Activated T-helper 1 cell treated with anti-CD3 and anti-CD28 coated beads, Interleukin-12 subunit alpha, Interleukin-12 subunit beta, Interleukin-2, Interleukin-4 antibody, amounts not matched to agents 30 ng/mL and 10 ng/mL and 1 ng/mL, durations not matched to agents 14 hours and 24 hours and 36 hours (primary cell): ENCODE measurements at regions of chrX and their contacts with region 1.

Region 1: DNA sequence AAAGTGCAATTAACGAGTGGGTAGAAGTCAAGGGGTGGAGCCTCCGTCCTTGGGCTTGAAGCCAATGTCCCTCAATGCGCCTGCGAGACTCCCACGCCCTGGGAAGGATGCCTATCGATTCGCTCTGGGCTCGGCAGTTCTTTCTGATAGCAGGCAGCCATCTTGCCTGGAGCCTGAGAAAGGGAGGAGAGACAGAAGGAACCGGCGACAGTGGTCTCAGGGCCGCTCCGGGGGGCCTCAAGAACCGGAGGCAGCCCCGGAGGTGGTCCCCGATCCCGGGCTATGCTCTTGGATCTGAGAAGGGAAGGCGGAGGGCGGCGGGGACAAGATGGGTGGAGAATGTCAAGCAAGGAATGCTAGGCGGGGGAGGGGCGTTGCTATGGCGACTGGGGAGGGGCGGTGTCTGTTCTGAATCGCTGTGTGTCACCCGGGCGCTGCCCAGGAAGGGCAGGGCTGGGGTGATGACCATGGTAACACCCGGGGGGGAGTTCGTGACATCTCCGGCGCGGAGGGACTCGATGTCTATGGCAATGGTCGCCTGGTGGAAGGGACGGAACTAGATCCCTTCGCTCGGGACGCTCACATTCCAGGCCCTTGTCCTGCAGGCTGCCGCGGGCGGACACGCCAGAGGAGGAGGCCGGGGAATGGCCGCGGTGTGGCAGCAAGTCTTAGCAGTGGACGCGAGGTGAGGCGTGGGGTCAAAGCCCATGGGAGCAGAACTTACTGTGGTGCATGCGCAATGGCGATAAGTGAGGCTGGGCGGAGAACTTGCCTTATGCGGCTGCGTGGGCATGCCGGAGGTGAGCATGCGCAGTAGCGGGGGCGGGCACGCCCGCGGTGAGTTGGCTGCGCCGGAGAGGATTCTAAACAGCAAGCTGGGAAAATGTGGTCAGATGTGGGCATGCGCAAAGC is at the start of gene WDR13:
- DNase-seq: peak; percentile 87
- H3K4me3 Mint-ChIP-seq: peak within 1 kb of the TSS; percentile 88
- H3K27ac Mint-ChIP-seq: peak within 1 kb of the TSS; percentile 94
- H3K4me1 Mint-ChIP-seq: peaks cover 12% of the 10 kb centered on the region
- H3K27me3 Mint-ChIP-seq: no peaks in the 10 kb centered on the region
- total RNA-seq, gene WDR13: 36.3 and 36.5 TPM in 2 replicates

Region 2: GRCh38 chrX:48357681-48358080 is 239.9 kb before region 1 on chrX:
- intact Hi-C with region 1: no loop called
- DNase-seq: no peak
- H3K4me3 Mint-ChIP-seq: no peak overlapping the region
- H3K27ac Mint-ChIP-seq: no peak overlapping the region
- H3K4me1 Mint-ChIP-seq: no peaks in the 10 kb centered on the region
- H3K27me3 Mint-ChIP-seq: no peaks in the 10 kb centered on the region

Region 3: DNA sequence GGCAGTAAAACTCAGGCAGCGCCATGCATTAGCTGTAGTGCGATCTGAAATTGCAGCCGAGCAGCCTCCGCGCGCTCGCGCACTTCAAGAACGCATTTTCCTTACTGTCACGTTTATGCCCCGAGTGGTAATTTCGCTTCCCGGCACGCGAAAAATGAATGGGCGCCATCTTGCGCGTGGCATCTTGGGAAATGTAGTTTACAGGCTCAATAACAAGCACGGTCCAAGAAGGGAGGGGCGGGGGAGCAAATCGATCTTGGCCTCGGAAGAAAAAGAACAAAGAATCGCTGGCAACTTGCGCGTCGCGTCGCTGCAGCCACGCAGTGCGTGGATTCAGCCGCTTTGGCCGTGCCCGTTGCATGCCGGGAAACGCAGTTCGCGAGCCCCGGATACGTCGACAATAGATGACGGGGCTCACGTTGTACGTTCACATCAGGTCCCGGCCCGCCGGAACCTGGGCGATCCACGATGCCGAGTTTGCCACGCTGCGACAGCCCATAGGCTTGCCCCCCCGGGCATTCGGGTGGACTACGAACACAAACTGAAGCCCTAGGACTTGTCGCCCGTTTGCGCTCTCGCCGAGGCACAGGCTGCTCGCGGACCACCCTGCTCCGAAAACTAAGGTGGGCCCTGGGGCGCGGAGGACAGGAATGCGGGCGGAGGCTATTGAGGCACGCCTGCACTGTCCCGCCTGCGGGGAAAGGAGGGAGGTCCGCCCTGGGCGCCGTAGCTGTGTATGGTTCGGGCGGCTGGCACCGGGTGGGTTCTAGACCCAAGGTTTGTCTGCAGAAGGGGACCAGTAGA is 121.6 kb before region 1 on chrX and contains the start of gene FTSJ1:
- intact Hi-C with region 1: loop called (anchors 1 kb)
- DNase-seq: peak; percentile 86
- H3K4me3 Mint-ChIP-seq: peak within 1 kb of the TSS; percentile 98
- H3K27ac Mint-ChIP-seq: peak within 1 kb of the TSS; percentile 90
- H3K4me1 Mint-ChIP-seq: peaks cover 20% of the 10 kb centered on the region
- H3K27me3 Mint-ChIP-seq: peaks cover 2% of the 10 kb centered on the region
- total RNA-seq, gene FTSJ1: 96.2 and 103 TPM in 2 replicates

Region 4: GRCh38 chrX:48539345-48540027 is 58.1 kb before region 1 on chrX and contains the start of gene TBC1D25:
- intact Hi-C with region 1: loop called (anchors 1 kb)
- DNase-seq: peak; percentile 93
- H3K4me3 Mint-ChIP-seq: peak within 1 kb of the TSS; percentile 94
- H3K27ac Mint-ChIP-seq: peak within 1 kb of the TSS; percentile 92
- H3K4me1 Mint-ChIP-seq: peaks cover 17% of the 10 kb centered on the region
- H3K27me3 Mint-ChIP-seq: no peaks in the 10 kb centered on the region
- total RNA-seq, gene TBC1D25: 13.5 and 16.0 TPM in 2 replicates

Region 5: DNA sequence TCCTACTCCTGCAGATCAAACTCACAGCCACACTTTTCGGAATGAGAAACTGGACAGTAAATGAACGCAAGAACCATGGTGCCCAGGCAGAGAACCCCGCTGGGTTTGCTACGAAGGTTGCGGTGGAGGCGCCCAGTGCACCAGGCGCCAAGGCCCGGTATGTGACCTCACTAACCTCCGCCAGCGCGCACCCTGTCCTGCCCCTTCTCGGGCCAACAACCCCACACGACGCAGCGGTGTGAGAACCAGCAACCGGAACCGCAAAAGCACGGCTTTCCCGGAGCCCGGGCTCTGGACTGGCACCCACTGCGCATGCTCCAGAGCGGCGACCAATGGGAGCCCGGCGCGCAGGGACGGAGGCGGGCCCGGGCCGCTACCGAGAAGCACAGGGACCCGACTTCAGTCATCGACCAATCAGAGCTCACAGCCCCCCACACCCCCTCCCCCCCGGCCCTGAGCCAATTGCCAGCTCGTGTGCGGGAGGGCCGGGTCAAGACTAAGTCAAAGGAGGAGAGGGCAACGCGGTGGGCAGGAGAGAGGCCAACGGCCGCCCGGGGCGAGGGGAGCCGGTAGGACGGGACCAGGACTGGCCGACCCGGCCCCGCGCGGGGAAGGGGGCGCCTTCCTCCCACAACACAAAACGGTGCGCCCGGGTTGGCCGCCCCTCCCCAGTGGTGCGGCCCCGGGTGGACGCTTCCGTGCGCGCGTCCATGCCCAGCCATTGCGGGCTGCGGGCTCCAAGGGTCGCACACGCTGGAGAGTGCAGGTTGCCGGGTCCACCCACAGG is 78.7 kb after region 1 on chrX:
- intact Hi-C with region 1: loop called (anchors 1 kb)
- DNase-seq: peak; percentile 87
- H3K4me3 Mint-ChIP-seq: peak overlapping the region; percentile 86
- H3K27ac Mint-ChIP-seq: peak overlapping the region; percentile 88
- H3K4me1 Mint-ChIP-seq: peaks cover 20% of the 10 kb centered on the region
- H3K27me3 Mint-ChIP-seq: no peaks in the 10 kb centered on the region

Region 6: DNA sequence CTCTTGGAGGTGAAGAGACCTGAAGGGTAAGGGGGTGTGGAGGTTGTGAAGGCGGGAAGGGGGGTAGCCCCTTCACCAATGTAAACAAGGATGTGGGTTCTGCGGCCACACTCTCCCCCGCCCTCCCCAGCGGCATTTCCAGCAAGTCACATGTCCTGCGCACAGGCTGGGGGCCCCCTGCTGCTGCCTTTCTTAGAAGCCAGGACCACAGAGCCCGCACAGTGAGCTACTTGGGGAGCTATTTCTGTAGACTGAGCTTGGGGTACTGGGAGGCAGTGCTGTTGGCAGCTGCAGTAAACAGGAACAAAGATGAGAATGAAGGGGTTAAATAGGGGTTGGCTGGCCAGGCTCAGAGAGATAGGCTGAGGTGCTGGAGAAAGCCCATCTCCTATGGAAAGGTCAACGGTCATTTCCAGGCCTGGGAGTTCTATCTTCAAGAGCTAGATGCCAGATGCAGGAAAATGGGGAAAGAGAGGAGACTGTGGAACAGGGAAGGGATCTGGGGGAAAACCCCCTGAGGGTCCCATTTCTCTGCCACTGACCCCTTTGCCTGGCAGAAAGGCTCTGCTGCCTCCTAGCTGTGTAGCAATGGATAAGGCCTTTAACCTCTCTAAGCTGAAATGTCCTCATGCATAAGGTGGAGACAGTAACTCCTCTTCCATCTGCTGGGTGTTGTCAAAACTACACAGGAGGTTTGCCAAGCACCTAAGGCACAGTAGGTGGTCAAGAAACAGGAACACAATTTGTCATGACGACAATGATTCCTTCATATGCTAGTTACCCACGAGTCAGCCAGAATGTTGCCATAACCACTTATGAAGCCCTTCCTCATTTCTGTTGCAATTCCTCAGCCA is 339.7 kb after region 1 on chrX:
- intact Hi-C with region 1: loop called (anchors 1 kb)
- DNase-seq: peak; percentile 85
- H3K4me3 Mint-ChIP-seq: peak overlapping the region; percentile 87
- H3K27ac Mint-ChIP-seq: peak overlapping the region; percentile 97
- H3K4me1 Mint-ChIP-seq: peaks cover 80% of the 10 kb centered on the region
- H3K27me3 Mint-ChIP-seq: no peaks in the 10 kb centered on the region

Region 7: DNA sequence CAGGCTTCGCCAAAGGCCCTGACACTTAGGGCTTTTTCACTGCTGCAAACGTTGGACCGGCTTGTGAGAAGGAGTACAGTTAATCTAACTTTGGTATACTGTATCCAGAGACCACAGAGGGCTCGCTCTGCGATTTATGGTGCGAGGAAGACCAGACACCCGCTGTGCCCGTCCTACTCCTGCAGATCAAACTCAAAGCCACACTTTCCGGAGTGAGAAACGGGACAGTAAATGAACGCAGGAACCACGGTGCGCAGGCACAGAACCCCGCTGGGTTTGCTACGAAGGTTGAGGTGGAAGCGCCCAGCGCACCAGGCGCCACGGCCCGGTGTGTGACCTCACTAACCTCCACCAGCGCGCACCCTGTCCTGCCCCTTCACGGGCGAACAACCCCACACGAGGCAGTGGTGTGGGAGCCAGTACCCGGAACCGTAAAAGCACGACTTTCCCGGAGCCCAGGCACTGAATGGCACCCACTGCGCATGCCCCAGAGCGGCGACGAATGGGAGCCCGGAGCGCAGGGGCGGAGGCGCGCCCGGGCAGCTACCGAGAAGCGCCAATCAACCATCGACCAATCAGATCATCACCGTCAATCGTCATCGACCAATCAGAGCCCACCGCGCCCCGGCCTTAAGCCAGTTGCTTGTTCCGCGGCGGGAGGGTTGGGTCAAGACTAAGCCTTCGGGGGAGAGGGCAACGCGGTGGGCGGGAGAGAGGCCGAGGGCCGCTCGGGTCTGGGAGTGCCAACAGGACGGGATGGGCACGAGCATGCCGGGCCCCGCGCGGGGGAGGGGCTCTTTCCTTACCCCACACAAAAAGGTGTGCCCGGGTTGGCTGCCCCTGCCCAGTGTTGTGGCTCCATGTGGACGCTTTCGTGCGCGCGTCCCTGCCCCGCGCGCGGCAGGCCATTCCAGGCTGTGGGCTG is 503.4 kb after region 1 on chrX:
- intact Hi-C with region 1: loop called (anchors 1 kb)
- DNase-seq: peak; percentile 86
- H3K4me3 Mint-ChIP-seq: peak overlapping the region; percentile 90
- H3K27ac Mint-ChIP-seq: peak overlapping the region; percentile 87
- H3K4me1 Mint-ChIP-seq: no peaks in the 10 kb centered on the region
- H3K27me3 Mint-ChIP-seq: no peaks in the 10 kb centered on the region

Region 8: DNA sequence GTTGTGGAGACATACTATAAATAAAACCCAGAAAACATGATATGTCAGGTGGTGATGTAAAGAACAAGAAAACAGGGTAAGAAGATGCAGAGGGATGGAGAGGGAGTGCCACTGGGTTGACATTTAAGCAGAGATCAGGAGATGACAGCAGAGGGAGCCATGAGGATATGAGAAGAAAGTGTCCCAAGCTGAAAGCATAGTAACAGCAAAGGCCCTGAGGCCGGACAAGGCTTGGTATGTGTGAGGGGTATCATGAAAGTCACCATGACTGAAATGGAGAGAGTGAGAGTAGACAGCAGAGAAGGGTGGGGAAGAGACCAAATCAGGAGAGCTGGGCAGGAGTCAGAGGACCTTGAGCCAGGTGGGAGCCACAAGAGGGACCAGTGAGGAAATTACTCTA is 522.5 kb after region 1 on chrX:
- intact Hi-C with region 1: no loop called
- DNase-seq: no peak
- H3K4me3 Mint-ChIP-seq: peak overlapping the region; percentile 69
- H3K27ac Mint-ChIP-seq: peak overlapping the region; percentile 71
- H3K4me1 Mint-ChIP-seq: peaks cover 40% of the 10 kb centered on the region
- H3K27me3 Mint-ChIP-seq: no peaks in the 10 kb centered on the region